GM12878 (cell line): ENCODE measurements at regions of chr7 and their contacts with region 1.

Region 1: GRCh38 chr7:100852048-100852872 is at the start of gene SLC12A9:
- DNase-seq: peak; percentile 45
- ATAC-seq: peak; percentile 99
- H3K4me3 ChIP-seq: peak within 1 kb of the TSS; percentile 91
- H3K27ac ChIP-seq: peak within 1 kb of the TSS; percentile 13
- H3K4me1 ChIP-seq: peaks cover 2% of the 10 kb centered on the region
- H3K27me3 ChIP-seq: no peaks in the 10 kb centered on the region
- CTCF ChIP-seq: peak; percentile 88 to 95 (median 92)
- EP300 ChIP-seq: 0 out of 4 replicates have a peak, but pooled peaks of 1 of the 2 experiments have one; percentile 9
- POLR2A ChIP-seq: peak; percentile 71
- RAD21 ChIP-seq: peak; percentile 92
- polyA plus RNA-seq, gene SLC12A9: 0.24 to 0.35 TPM

Region 2: DNA sequence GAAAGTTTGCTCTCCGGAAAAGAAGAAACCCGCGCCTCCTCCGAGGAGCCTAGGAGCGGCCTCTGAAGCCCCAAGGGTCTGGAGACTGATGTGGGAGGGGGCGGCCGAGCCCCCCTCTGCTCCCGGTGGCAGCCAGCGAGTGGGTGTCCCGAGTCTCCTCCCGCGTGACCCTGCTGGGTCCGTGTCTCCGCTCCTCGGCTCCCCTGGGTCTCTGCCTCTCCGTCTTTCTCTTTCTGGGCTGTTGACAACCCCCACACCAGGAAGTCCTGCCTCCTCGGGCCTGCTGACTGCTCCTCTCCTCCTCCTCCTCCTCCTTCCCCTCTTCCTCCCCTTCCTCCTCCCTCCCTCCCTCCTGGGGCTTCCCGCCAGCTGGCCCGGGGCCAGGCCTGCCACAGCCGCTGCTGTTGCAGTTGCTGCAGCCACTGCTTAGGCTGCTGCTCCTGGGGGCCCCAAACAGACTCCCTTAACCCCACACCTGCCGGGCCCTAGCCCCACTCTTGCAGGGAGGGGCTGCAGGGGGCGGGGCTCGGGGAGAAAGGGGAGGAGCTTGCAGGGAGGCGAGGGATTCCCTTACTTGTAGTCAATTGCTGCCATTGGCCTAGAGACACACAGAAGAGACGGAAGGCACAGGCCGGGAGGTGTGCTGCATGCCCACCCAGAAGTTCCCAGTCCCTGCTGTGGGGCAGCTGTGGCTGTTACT is 373.1 kb before region 1 on chr7 and contains the start of gene TSC22D4:
- CTCF ChIA-PET with region 1: no interaction called
- POLR2A ChIA-PET with region 1: no interaction called
- RAD21 ChIA-PET with region 1: no interaction called
- SMC1A ChIA-PET with region 1: interaction called, 5 read pairs
- in situ Hi-C with region 1: loop called (anchors 10 kb)
- intact Hi-C with region 1: no loop called
- DNase-seq: peak; percentile 79
- ATAC-seq: peak; percentile 85
- H3K4me3 ChIP-seq: peak within 1 kb of the TSS; percentile 99
- H3K27ac ChIP-seq: peak within 1 kb of the TSS; percentile 89
- H3K4me1 ChIP-seq: peaks cover 27% of the 10 kb centered on the region
- H3K27me3 ChIP-seq: no peaks in the 10 kb centered on the region
- CTCF ChIP-seq: no peak
- EP300 ChIP-seq: no peak
- POLR2A ChIP-seq: peak; percentile 87
- RAD21 ChIP-seq: no peak
- polyA plus RNA-seq, gene TSC22D4: 0.50 to 1.2 TPM

Region 3: DNA sequence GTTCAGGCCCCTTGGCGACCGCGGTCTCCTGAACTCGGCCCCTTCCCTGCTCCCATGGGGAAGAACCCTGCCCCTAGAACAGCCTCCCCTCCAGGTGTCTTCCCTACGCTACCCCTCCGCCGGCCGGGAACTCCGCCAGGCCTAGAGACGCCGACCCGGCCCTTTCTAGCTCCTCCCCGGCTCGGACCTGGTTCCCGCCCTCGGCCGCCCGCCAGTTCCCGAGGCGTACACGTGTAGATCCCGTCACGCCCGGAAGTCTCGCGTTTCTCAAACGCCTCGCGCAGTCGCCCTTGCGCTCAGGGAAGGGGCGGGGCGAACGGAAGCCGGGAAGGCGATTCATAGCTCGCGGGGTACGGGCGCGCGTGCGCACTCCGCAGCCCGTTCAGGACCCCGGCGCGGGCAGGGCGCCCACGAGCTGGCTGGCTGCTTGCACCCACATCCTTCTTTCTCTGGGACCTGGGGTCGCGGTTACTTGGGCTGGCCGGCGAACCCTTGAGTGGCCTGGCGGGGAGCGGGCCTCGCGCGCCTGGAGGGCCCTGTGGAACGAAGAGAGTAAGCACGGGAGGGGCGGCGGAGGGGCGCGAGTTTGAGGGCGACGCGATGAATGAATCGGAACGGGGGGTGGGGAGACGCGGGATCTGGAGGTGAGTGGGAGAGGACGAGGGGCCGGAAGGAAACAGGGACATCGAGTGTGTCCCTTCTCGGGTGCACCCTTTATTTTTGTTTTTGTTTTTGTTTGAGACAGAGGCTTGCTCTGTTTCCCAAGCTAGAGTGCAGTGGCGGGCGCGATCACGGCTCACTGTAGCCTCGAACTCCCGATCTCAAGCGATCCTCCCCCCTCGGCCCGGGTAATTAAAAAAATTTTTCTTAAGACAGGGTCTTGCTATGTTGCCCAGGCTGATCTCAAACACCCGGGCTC is 146.2 kb before region 1 on chr7 and contains the start of gene POP7:
- CTCF ChIA-PET with region 1: interaction called, 76 read pairs
- POLR2A ChIA-PET with region 1: interaction called, 6 read pairs
- RAD21 ChIA-PET with region 1: interaction called, 43 read pairs
- SMC1A ChIA-PET with region 1: interaction called, 44 read pairs
- in situ Hi-C with region 1: loop called (anchors 10 kb)
- intact Hi-C with region 1: loop called (anchors 1 kb)
- DNase-seq: peak; percentile 90
- ATAC-seq: peak; percentile 98
- H3K4me3 ChIP-seq: peak within 1 kb of the TSS; percentile 97
- H3K27ac ChIP-seq: peak within 1 kb of the TSS; percentile 93
- H3K4me1 ChIP-seq: peaks cover 13% of the 10 kb centered on the region
- H3K27me3 ChIP-seq: no peaks in the 10 kb centered on the region
- CTCF ChIP-seq: no peak
- EP300 ChIP-seq: no peak
- POLR2A ChIP-seq: peak; percentile 89
- RAD21 ChIP-seq: no peak
- polyA plus RNA-seq, gene POP7: 12.1 to 37.9 TPM

Region 4: GRCh38 chr7:100803398-100804233 is 48.6 kb before region 1 on chr7:
- CTCF ChIA-PET with region 1: interaction called, 238 read pairs
- POLR2A ChIA-PET with region 1: interaction called, 13 read pairs
- RAD21 ChIA-PET with region 1: interaction called, 147 read pairs
- SMC1A ChIA-PET with region 1: interaction called, 104 read pairs
- in situ Hi-C with region 1: no loop called
- intact Hi-C with region 1: loop called (anchors 1 kb)
- DNase-seq: peak; percentile 56
- ATAC-seq: peak; percentile 98
- H3K4me3 ChIP-seq: peak overlapping the region; percentile 53
- H3K27ac ChIP-seq: peak overlapping the region; percentile 80
- H3K4me1 ChIP-seq: peaks cover 15% of the 10 kb centered on the region
- H3K27me3 ChIP-seq: no peaks in the 10 kb centered on the region
- CTCF ChIP-seq: no peak
- EP300 ChIP-seq: no peak
- POLR2A ChIP-seq: peak; percentile 47; the same call in 1 of the 2 replicates
- RAD21 ChIP-seq: no peak

Region 5: DNA sequence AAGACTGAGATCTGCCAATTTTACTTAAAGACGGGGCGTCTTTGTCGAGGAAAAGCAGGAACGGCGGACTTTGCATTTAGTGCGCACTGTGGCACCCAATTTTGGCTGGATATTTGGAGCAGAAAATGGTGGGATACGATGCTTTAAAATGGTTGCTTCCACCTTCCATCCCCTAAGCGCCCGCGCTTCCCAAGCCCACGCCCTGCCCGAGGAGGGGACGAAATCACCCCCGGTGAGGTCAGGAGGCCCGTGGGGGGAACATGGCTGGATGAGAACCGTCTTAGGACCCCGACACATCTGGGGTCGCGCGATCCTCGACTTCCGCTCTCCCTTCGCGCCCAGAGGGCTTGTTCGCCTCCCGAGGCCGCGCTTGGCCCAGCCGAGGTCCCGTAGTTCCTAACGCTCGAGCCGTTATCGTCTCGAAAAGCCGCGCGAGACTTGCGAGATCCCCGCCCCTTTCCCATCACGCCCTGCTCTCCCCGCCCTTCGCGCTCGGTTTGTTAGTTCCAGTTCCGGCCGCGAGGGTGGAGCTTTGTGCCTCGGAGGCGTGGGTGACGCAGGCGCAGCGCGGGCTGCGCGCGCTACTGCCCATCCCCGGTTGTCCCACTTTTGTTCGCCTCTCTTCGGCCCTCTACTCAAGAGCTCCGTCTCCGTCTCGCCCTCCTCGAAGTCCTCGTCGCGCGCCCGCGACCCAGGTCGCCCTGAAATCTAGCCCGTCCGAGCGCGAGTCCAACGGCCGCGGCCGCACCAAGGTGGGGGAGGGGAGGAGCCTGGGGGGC is 22.5 kb after region 1 on chr7 and contains the start of gene SRRT:
- CTCF ChIA-PET with region 1: interaction called, 6 read pairs
- POLR2A ChIA-PET with region 1: interaction called, 8 read pairs
- RAD21 ChIA-PET with region 1: interaction called, 10 read pairs
- SMC1A ChIA-PET with region 1: interaction called, 5 read pairs
- in situ Hi-C with region 1: no loop called
- intact Hi-C with region 1: no loop called
- DNase-seq: peak; percentile 93
- ATAC-seq: peak; percentile 96
- H3K4me3 ChIP-seq: peak within 1 kb of the TSS; percentile 99
- H3K27ac ChIP-seq: peak within 1 kb of the TSS; percentile 98
- H3K4me1 ChIP-seq: peaks cover 6% of the 10 kb centered on the region; the same call in 1 of the 2 replicates
- H3K27me3 ChIP-seq: no peaks in the 10 kb centered on the region
- CTCF ChIP-seq: peak in 1 of 3 experiments; percentile 16; a peak in 1 of 6 replicates
- EP300 ChIP-seq: peak in 1 of 2 experiments; percentile 28; a peak in 1 of 4 replicates
- POLR2A ChIP-seq: peak; percentile 96
- RAD21 ChIP-seq: no peak
- polyA plus RNA-seq, gene SRRT: 11.1 to 33.6 TPM